ENCODE measurements at regions of chr15 and their contacts with region 1.

Region 1: DNA sequence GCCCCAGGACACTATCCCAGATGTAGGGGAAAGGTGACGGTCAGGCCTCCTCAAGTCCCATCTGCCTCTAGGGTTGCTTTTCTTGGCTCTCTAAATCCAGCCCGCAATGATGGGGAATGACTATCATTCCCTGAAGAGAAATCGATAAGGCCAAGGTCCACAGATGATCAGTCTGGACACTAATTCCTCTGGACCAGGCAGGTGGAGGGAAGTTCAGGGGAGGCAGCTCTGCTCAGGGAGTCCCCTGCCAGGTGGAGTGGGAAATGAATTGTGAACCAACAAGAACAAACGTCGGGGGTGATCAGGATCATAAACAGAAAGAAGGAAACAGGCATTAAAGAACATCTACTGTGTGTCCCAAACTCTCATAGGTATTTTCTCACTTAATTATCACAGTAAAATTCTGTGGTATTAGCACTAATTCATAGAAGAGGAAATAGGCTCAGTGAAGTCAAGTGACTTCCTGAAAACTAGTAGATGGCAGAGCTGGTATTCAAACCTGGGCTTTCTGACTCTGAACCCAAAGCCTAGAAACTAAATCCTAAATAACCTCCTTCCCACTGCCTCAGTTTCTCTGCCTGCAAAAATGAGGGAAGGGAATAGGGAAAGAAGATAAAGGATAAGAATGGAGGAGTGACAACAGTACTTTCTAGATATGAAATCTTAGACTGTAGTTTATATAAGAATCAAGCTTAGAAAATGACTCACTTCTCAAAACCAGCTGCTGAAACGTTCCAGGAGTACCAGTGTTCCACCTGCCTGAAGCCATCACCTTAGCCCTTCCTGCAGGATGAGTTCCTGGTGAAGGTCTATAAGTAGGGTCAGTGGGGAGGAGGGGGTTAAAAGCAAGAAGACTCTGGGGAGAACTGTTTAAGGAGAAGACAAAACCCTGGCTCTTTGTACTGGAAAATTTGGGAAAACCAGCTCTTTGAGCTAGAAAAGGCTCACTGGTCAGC is 7.5 kb downstream of the BMF start:
- DNase-seq: no peak
- ATAC-seq: no peak
- H3K4me3 ChIP-seq: no peak overlapping the region
- H3K27ac ChIP-seq: 0 out of 2 replicates have a peak overlapping the region, but pooled peaks have one; percentile 5
- H3K4me1 ChIP-seq: peaks cover 69% of the 10 kb centered on the region
- H3K27me3 ChIP-seq: no peaks in the 10 kb centered on the region
- CTCF ChIP-seq: no peak

Region 2: GRCh38 chr15:39195988-39196486 is 905.2 kb before region 1 on chr15:
- CTCF ChIA-PET with region 1: no interaction called
- POLR2A ChIA-PET with region 1: no interaction called
- in situ Hi-C with region 1: no loop called
- intact Hi-C with region 1: no loop called
- DNase-seq: no peak
- ATAC-seq: no peak
- H3K4me3 ChIP-seq: no peak overlapping the region
- H3K27ac ChIP-seq: no peak overlapping the region
- H3K4me1 ChIP-seq: no peaks in the 10 kb centered on the region; the same call in 1 of the 2 replicates
- H3K27me3 ChIP-seq: no peaks in the 10 kb centered on the region
- CTCF ChIP-seq: no peak

Region 3: GRCh38 chr15:40121911-40122638 is 20.9 kb after region 1 on chr15:
- CTCF ChIA-PET with region 1: interaction called, 6 read pairs
- POLR2A ChIA-PET with region 1: interaction called, 11 read pairs
- in situ Hi-C with region 1: no loop called
- intact Hi-C with region 1: no loop called
- DNase-seq: no peak
- ATAC-seq: no peak
- H3K4me3 ChIP-seq: no peak overlapping the region
- H3K27ac ChIP-seq: no peak overlapping the region
- H3K4me1 ChIP-seq: peaks cover 2% of the 10 kb centered on the region; the same call in 1 of the 2 replicates
- H3K27me3 ChIP-seq: peaks cover 5% of the 10 kb centered on the region
- CTCF ChIP-seq: no peak

Region 4: GRCh38 chr15:40190591-40190990 is 89.4 kb after region 1 on chr15:
- CTCF ChIA-PET with region 1: interaction called, 13 read pairs
- POLR2A ChIA-PET with region 1: no interaction called
- in situ Hi-C with region 1: no loop called
- intact Hi-C with region 1: no loop called
- DNase-seq: peak; percentile 59
- ATAC-seq: peak; percentile 65; the same call in 1 of the 2 replicates
- H3K4me3 ChIP-seq: no peak overlapping the region
- H3K27ac ChIP-seq: no peak overlapping the region
- H3K4me1 ChIP-seq: no peaks in the 10 kb centered on the region
- H3K27me3 ChIP-seq: no peaks in the 10 kb centered on the region
- CTCF ChIP-seq: no peak

Region 5: DNA sequence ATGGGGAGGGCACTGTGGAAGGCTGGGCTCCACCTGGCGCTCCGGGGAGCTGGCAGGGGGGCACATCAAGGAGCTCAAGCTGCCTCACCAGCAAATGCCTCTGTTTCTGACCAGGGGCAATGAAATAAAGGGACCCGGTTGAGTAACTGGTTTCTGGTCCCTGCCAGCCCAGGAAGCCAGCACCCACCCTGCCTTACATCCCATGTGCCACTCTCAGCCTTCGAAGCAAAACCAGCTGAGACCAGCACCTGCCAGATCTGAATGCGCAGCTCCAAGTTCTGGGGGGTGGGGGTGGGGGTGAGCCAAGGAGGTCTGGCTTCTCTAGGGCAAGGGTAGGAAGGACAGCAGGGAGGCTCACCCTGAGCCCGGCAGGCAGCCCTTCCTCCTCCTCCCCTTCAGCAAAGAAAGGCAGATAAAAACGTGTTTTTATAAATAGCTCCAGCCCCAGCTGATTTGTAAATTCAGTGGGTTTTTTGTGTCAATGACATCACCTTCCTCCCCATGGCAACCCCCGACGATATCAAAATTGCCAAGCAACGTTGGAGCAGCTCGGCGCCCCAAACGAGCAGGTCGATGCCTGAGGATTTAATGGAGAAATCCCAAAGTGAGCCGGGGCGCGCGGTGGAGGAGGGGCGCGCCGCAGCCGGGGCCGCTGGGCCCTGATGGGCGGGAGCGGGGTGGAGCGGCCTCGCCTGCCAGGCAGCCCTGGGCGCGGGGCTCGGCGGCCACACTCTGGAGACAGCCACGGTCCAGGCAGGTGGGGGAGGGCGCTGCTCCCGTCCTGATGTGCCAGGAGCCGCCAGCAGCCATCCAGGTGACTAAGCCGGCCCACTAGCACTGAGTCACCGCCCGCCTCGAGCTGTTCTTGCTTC is 137.5 kb after region 1 on chr15 and contains the start of gene PAK6:
- CTCF ChIA-PET with region 1: no interaction called
- POLR2A ChIA-PET with region 1: no interaction called
- in situ Hi-C with region 1: no loop called
- intact Hi-C with region 1: no loop called
- DNase-seq: no peak
- ATAC-seq: peak; percentile 81
- H3K4me3 ChIP-seq: peak within 1 kb of the TSS; percentile 38 to 45
- H3K27ac ChIP-seq: peak within 1 kb of the TSS; percentile 44
- H3K4me1 ChIP-seq: peaks cover 16% of the 10 kb centered on the region
- H3K27me3 ChIP-seq: no peaks in the 10 kb centered on the region
- CTCF ChIP-seq: no peak
- total RNA-seq, gene PAK6: 6.3 TPM